ENCODE measurements at regions of chr20 and their contacts with region 1.

Region 1: DNA sequence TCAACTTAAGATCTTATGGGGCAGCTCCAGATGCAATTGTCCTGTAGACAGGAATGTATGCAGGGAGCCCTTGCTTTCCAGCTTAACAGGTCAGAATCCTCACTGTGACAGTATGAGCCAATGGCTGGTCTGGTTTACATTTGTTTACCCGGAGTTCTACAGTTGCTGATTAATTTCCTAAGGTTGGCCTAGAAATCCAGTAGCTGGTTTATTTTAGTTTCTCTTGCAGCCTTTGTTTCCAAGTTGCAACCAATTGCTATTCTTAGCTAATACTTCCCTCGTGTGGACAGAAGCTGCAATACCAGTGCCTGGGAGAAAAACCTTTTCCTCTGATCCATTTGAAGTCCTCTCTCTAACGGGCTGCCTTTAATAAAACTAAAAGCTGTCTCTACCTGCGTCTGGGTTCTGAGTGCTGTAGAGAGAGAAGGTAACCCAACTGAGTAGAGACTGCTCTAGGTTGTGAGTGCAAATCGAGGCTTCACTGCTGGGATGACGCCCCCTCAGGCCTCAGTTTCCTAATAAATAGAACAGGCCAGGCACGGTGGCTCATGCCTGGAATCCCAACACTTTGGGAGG is 45.9 kb downstream of the ZNF217 start:
- DNase-seq: peak in 1 of 3 donors; percentile 60
- ATAC-seq: peak; percentile 76
- H3K4me3 ChIP-seq: no peak overlapping the region
- H3K4me1 ChIP-seq: no peaks in the 10 kb centered on the region
- CTCF ChIP-seq: peak; percentile 55

Region 2: GRCh38 chr20:53157443-53158408 is 390.0 kb before region 1 on chr20:
- intact Hi-C with region 1: loop called in 1 of 2 experiments (anchors 10 kb)
- DNase-seq: peak; percentile 46 to 83 (median 65)
- ATAC-seq: peak; percentile 79
- H3K4me3 ChIP-seq: no peak overlapping the region
- H3K4me1 ChIP-seq: peaks cover 3% of the 10 kb centered on the region
- CTCF ChIP-seq: peak; percentile 39